ENCODE measurements at regions of chr3 and their contacts with region 1.

Region 1: GRCh38 chr3:185880600-185880999 is 55.8 kb upstream of the IGF2BP2 start:
- DNase-seq: no peak
- H3K4me3 ChIP-seq: no peak overlapping the region
- H3K27ac ChIP-seq: no peak overlapping the region
- H3K4me1 ChIP-seq: no peaks in the 10 kb centered on the region
- H3K27me3 ChIP-seq: no peaks in the 10 kb centered on the region
- CTCF ChIP-seq: no peak
- POLR2A ChIP-seq: no peak

Region 2: DNA sequence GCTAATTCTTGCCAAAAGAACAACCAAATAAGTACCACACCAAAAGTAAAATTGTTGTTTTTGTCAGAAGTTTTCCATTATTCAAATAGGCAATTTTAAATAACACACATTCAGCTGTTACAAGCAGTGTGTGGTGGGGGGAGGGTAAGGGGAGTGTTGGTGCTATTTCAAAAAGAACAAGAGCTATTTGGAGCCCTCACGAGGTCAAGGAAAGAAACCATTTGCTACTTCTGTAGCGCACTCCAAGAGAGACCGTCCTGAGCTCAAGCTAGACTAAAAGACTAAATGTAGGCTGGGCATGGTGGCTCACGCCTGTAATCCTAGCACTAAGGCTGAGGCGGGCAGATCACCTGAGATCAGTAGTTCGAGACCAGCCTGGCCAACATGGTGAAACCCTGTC is 34.6 kb before region 1 on chr3:
- CTCF ChIA-PET with region 1: no interaction called
- POLR2A ChIA-PET with region 1: no interaction called
- dilution Hi-C with region 1: no loop called
- intact Hi-C with region 1: loop called (anchors 5 kb)
- DNase-seq: no peak
- H3K4me3 ChIP-seq: no peak overlapping the region
- H3K27ac ChIP-seq: no peak overlapping the region
- H3K4me1 ChIP-seq: no peaks in the 10 kb centered on the region
- H3K27me3 ChIP-seq: peaks cover 4 to 9% of the 10 kb centered on the region in 2 experiments
- CTCF ChIP-seq: no peak
- POLR2A ChIP-seq: no peak